ENCODE measurements at regions of chr6 and their contacts with region 1.

Region 1: GRCh38 chr6:32971581-32972352 is 3.4 kb downstream of the BRD2 start:
- DNase-seq: peak; percentile 100
- H3K4me3 ChIP-seq: peak overlapping the region; percentile 90 to 100 (median 98)
- H3K27ac ChIP-seq: peak overlapping the region; percentile 98 to 100
- H3K4me1 ChIP-seq: peaks cover 21 to 64% (median 54%) of the 10 kb centered on the region in 4 experiments
- H3K27me3 ChIP-seq: no peaks in the 10 kb centered on the region

Region 2: DNA sequence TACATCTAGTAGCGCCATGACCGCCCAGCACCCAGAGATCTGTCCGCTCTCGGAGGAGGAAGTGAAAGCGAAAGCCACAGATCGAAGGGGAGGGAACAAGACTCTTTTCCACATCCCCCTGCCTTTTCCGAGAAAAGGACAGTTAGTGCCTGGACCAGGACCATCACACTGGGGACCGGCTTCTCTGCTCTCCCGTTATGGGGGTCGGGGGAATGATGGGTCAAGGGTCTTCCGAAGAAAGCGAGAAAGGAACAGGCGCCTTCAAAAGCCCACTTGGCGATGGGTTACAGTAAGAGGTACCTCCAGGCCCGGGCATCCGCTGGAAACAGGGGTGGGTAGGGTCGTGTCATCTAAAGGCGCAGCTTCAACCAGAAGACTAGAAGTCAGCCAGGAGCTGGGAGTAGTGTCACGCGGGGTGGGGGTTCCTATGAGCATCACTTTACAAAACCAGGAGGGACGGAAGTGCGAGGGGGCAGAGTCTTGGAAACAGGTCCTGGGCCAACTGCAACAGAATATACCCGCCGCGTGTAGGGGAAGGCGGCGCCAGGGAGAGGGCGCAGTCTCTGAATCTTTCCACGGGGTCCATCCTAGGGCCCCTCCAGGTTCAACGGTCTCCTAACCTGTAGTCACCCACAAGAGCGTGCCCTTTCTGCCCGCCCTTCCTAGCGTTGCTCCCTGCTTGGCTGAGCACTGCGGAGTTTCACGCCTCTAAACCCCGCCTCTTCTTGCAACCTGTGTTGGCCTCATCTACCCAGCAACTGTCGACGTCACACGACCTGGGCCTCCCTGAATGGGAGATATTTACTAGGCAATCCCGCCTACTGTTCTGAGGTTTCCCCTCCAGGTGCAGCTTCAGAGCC is 127.6 kb before region 1 on chr6 and contains the start of gene PSMB8:
- CTCF ChIA-PET with region 1: interaction called, 16 read pairs
- POLR2A ChIA-PET with region 1: interaction called, 7 read pairs
- DNase-seq: peak; percentile 96 to 97 (median 97)
- H3K4me3 ChIP-seq: peak within 1 kb of the TSS; percentile 88 to 98 (median 94)
- H3K27ac ChIP-seq: peak within 1 kb of the TSS; percentile 80 to 92
- H3K4me1 ChIP-seq: peaks cover 23 to 71% (median 40%) of the 10 kb centered on the region in 4 experiments
- H3K27me3 ChIP-seq: no peaks in the 10 kb centered on the region

Region 3: DNA sequence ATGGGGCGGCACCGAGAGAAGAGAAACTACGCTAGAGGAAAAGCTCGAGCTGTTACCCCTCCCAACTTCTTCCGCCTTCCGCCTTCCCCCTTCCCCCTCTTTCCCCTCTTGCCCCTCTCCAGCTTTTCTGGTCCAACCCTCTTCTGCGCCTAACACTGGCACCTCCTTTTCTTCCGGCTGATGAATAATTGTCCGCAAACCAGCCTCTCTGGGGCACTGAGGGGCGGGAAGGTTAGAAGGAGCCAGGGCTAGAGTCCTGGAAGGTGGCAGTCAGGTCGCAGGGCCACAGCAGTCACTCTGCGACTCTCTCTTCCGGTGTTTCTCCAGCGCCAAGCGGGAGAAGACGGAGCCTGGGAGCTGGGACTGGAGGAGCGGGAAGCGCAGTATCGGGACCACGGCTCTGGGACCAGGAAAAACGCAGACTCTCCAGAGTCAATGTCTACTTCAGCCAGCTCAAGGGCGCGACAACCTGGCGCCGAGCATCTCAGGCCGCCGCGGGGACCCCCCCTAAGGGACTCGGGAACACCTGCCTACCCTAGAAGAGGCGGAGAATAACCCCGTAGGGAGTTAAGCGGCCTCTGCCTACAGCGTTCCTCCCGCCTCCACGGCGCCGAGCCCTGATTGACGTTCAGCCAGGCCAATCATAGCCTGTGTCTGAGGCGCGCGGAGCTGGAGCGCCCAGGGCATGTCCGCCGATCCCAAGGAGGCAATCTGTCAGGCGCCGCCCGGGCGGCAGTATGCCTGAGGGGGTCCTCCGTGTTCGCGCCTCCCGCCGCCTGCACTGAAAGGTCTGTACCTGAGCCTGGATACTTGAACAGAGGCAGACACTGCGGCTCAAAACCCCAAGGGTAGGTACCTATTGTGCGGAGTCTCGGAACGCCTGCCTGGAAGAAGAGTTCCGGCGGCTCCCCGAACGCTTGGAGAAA is 77.4 kb before region 1 on chr6:
- CTCF ChIA-PET with region 1: interaction called, 4 read pairs
- POLR2A ChIA-PET with region 1: interaction called, 25 read pairs
- DNase-seq: peak; percentile 92 to 96 (median 94)
- H3K4me3 ChIP-seq: peak overlapping the region; percentile 69 to 98 (median 97)
- H3K27ac ChIP-seq: peak overlapping the region; percentile 57 to 88
- H3K4me1 ChIP-seq: peaks cover 6 to 37% (median 18%) of the 10 kb centered on the region in 4 experiments
- H3K27me3 ChIP-seq: no peaks in the 10 kb centered on the region

Region 4: DNA sequence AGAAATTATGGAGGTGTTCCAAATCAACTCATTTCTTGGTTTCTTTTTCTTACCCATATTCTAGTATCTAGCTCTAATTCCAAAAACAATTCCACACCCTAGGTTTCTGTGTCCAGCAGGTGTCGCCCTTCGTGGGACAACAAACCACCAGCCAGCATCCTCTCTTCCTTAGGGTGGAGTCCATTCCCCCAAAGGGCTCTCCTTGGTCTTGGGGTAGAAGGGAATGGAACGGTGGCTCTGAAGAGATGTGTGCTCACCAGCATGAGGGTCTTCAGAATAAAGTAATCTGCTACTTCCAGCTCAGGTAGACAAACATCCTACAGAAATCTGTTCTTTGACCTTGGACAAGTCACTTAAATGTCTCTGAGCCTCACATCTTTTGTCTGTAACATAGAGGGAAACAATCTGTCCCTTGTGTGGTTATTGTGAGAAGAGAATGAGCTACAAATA is 38.1 kb before region 1 on chr6:
- CTCF ChIA-PET with region 1: interaction called, 48 read pairs
- POLR2A ChIA-PET with region 1: interaction called, 19 read pairs
- DNase-seq: peak; percentile 76 to 81 (median 76)
- H3K4me3 ChIP-seq: no peak overlapping the region
- H3K27ac ChIP-seq: no peak overlapping the region
- H3K4me1 ChIP-seq: peaks cover 0 to 18% (median under 1%) of the 10 kb centered on the region in 4 experiments
- H3K27me3 ChIP-seq: no peaks in the 10 kb centered on the region

Region 5: GRCh38 chr6:32940656-32941213 is 31.0 kb before region 1 on chr6 and contains the start of gene HLA-DMB:
- CTCF ChIA-PET with region 1: interaction called, 48 read pairs
- POLR2A ChIA-PET with region 1: interaction called, 24 read pairs
- DNase-seq: peak; percentile 85 to 88 (median 87)
- H3K4me3 ChIP-seq: peak within 1 kb of the TSS; percentile 70 to 97 (median 89)
- H3K27ac ChIP-seq: peak within 1 kb of the TSS; percentile 72 to 83
- H3K4me1 ChIP-seq: peaks cover 36 to 78% (median 59%) of the 10 kb centered on the region in 4 experiments
- H3K27me3 ChIP-seq: no peaks in the 10 kb centered on the region

Region 6: GRCh38 chr6:32947552-32948465 is 24.0 kb before region 1 on chr6:
- CTCF ChIA-PET with region 1: interaction called, 346 read pairs
- POLR2A ChIA-PET with region 1: interaction called, 149 read pairs
- DNase-seq: peak; percentile 56 to 69 (median 62)
- H3K4me3 ChIP-seq: no peak overlapping the region
- H3K27ac ChIP-seq: no peak overlapping the region
- H3K4me1 ChIP-seq: peaks cover 34 to 68% (median 63%) of the 10 kb centered on the region in 4 experiments
- H3K27me3 ChIP-seq: no peaks in the 10 kb centered on the region

Region 7: DNA sequence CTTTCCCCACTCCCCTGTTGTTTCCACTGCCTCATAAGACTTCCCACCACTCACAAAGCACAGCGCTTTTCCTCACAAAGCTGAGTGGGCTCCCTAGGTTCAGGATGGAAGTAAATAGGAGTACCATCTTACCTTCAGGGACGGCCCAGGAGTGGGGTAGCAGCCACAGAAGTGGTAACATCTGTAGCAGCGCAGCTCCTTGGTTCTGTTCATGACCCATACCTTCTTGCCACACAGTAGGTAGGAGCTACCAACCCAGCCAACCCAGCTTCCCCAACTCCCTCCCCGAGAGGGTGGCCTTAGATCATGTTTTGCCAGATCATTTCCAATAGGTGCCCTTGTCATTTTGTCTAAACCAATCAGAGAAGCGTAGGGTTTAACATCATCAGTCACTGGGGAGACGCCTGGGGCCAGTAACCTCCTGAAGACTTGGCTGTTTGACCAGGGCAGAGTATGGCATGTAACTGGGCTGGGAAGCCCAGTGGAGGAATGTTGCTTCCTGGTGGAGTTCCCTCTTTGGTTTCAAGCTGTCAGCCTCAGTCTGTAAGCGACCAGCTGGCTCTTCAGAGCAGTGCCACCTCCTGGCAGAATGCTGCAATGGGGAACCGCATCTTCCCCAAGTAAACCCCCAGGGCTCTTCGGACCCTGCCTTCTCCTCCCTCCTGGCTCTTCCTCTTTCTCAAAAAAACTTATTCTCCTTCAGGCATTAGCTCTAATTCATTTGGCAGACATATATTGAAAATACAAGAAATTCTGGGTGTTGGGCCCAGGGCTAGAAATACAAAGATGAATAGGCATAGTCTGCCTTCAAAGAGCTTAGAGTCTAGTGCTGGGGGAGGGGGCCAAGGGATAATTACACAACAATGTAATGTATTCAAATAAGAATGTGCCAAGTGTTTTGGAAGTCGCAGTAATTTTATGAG is 18.7 kb before region 1 on chr6 and contains the start of gene HLA-DMA:
- CTCF ChIA-PET with region 1: interaction called, 346 read pairs
- POLR2A ChIA-PET with region 1: interaction called, 149 read pairs
- DNase-seq: peak; percentile 99 to 100 (median 99)
- H3K4me3 ChIP-seq: peak within 1 kb of the TSS; percentile 47 to 99 (median 80)
- H3K27ac ChIP-seq: peak within 1 kb of the TSS; percentile 78 to 91
- H3K4me1 ChIP-seq: peaks cover 13 to 55% (median 50%) of the 10 kb centered on the region in 4 experiments
- H3K27me3 ChIP-seq: no peaks in the 10 kb centered on the region